ENCODE measurements at regions of chrX and their contacts with region 1.

Region 1: GRCh38 chrX:110847334-110847733 is 51.7 kb upstream of the CHRDL1 start:
- DNase-seq: peak; percentile 42
- H3K4me3 ChIP-seq: no peak overlapping the region
- H3K27ac ChIP-seq: no peak overlapping the region
- H3K4me1 ChIP-seq: no peaks in the 10 kb centered on the region
- H3K27me3 ChIP-seq: no peaks in the 10 kb centered on the region
- CTCF ChIP-seq: peak; percentile 8 to 17
- POLR2A ChIP-seq: no peak

Region 2: DNA sequence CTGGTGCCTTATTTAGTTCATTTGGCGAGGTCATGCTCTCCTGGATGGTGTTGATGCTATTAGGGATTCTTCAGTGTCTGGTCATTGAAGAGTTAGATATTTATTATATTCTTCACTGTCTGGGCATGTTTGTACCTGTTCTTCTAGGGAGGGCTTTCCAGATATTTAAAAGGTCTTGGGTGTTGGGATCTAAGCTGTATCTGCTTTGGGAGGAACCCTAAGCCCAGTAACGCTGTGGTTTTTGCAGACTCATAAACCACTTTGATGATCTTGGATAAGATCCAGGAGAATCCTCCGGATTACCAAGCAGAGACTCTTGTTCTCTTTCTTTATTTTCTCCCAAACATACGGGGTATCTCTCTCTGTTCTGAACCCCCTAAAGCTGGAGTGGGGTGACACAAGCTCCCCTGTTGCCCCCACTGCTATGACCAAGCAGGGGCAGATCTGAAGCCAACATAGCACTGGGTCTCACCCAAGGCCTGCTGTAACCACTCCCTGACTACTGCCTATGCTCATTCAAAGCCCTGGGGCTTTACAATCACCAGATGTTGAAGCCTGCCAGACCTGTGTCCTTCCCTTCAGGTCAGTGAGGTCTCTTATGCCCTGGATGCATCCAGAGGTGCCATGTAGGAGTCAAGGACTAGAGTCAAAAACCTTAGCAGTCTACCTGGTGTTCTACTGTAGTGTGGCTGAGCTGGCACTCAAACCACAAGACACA is 1553.1 kb before region 1 on chrX:
- CTCF ChIA-PET with region 1: no interaction called
- POLR2A ChIA-PET with region 1: no interaction called
- dilution Hi-C with region 1: no loop called
- intact Hi-C with region 1: no loop called
- DNase-seq: no peak
- H3K4me3 ChIP-seq: no peak overlapping the region
- H3K27ac ChIP-seq: no peak overlapping the region
- H3K4me1 ChIP-seq: no peaks in the 10 kb centered on the region
- H3K27me3 ChIP-seq: peaks cover 0 to 3% of the 10 kb centered on the region in 2 experiments
- CTCF ChIP-seq: no peak
- POLR2A ChIP-seq: no peak

Region 3: GRCh38 chrX:109398833-109399232 is 1448.5 kb before region 1 on chrX:
- CTCF ChIA-PET with region 1: no interaction called
- POLR2A ChIA-PET with region 1: no interaction called
- dilution Hi-C with region 1: no loop called
- intact Hi-C with region 1: no loop called
- DNase-seq: no peak
- H3K4me3 ChIP-seq: no peak overlapping the region
- H3K27ac ChIP-seq: no peak overlapping the region
- H3K4me1 ChIP-seq: no peaks in the 10 kb centered on the region
- H3K27me3 ChIP-seq: peaks cover 0 to 3% of the 10 kb centered on the region in 2 experiments
- CTCF ChIP-seq: no peak
- POLR2A ChIP-seq: no peak

Region 4: GRCh38 chrX:110418316-110419235 is 428.8 kb before region 1 on chrX:
- CTCF ChIA-PET with region 1: interaction called, 10 read pairs
- POLR2A ChIA-PET with region 1: no interaction called
- dilution Hi-C with region 1: no loop called
- intact Hi-C with region 1: no loop called
- DNase-seq: peak; percentile 30
- H3K4me3 ChIP-seq: no peak overlapping the region
- H3K27ac ChIP-seq: no peak overlapping the region
- H3K4me1 ChIP-seq: no peaks in the 10 kb centered on the region
- H3K27me3 ChIP-seq: peaks cover 0 to 3% of the 10 kb centered on the region in 2 experiments
- CTCF ChIP-seq: peak; percentile 25 to 49
- POLR2A ChIP-seq: no peak

Region 5: GRCh38 chrX:110444996-110445395 is 402.3 kb before region 1 on chrX:
- CTCF ChIA-PET with region 1: interaction called, 15 read pairs
- POLR2A ChIA-PET with region 1: no interaction called
- dilution Hi-C with region 1: no loop called
- intact Hi-C with region 1: loop called (anchors 1 kb)
- DNase-seq: no peak
- H3K4me3 ChIP-seq: no peak overlapping the region
- H3K27ac ChIP-seq: no peak overlapping the region
- H3K4me1 ChIP-seq: no peaks in the 10 kb centered on the region
- H3K27me3 ChIP-seq: peaks cover 3 to 5% of the 10 kb centered on the region in 2 experiments
- CTCF ChIP-seq: no peak
- POLR2A ChIP-seq: no peak

Region 6: DNA sequence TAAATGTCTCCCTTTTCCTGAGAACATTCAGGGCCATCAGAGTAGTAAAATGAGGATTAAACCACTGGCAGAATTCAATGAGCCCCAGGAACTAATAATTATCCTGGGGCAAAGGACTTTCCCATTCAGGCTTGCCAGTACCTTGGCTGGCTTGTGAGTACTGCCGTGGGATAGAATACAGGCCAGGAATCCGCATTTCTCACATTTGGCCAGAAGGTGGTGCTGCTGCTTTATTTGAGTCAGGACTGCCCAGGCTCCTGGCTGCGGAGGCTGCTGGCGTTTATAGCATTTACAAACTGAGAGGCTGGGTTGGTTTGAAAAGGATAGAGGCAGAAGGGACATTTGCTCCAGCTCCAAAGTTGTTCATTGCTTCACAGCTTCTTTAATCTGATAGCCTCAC is 397.3 kb before region 1 on chrX:
- CTCF ChIA-PET with region 1: interaction called, 22 read pairs
- POLR2A ChIA-PET with region 1: no interaction called
- dilution Hi-C with region 1: no loop called
- intact Hi-C with region 1: loop called (anchors 1 kb)
- DNase-seq: peak; percentile 56
- H3K4me3 ChIP-seq: no peak overlapping the region
- H3K27ac ChIP-seq: no peak overlapping the region
- H3K4me1 ChIP-seq: no peaks in the 10 kb centered on the region
- H3K27me3 ChIP-seq: peaks cover 3 to 5% of the 10 kb centered on the region in 2 experiments
- CTCF ChIP-seq: peak; percentile 49 to 58
- POLR2A ChIP-seq: no peak

Region 7: GRCh38 chrX:110836982-110837381 is 10.4 kb before region 1 on chrX:
- CTCF ChIA-PET with region 1: interaction called, 12 read pairs
- POLR2A ChIA-PET with region 1: no interaction called
- dilution Hi-C with region 1: no loop called
- intact Hi-C with region 1: no loop called
- DNase-seq: no peak
- H3K4me3 ChIP-seq: no peak overlapping the region
- H3K27ac ChIP-seq: no peak overlapping the region
- H3K4me1 ChIP-seq: no peaks in the 10 kb centered on the region
- H3K27me3 ChIP-seq: no peaks in the 10 kb centered on the region
- CTCF ChIP-seq: no peak
- POLR2A ChIP-seq: no peak

Measured in endothelial cell of umbilical vein (primary cell).